CD4-positive, alpha-beta T cell (primary cell): ENCODE measurements at regions of chr1 and their contacts with region 1.

Region 1: GRCh38 chr1:43227143-43227764 is 42.5 kb upstream of the TMEM125 start:
- DNase-seq: peak; percentile 73 to 91 (median 84)
- ATAC-seq: peak; percentile 89
- H3K4me3 ChIP-seq: no peak overlapping the region
- H3K4me3 Mint-ChIP-seq: no peak overlapping the region
- H3K27ac ChIP-seq: no peak overlapping the region
- H3K27ac Mint-ChIP-seq: no peak overlapping the region
- H3K4me1 ChIP-seq: peaks cover 3% of the 10 kb centered on the region
- H3K4me1 Mint-ChIP-seq: no peaks in the 10 kb centered on the region
- H3K27me3 ChIP-seq: no peaks in the 10 kb centered on the region
- H3K27me3 Mint-ChIP-seq: no peaks in the 10 kb centered on the region
- CTCF ChIP-seq: peak; percentile 89

Region 2: GRCh38 chr1:43414634-43415223 is 187.5 kb after region 1 on chr1:
- CTCF ChIA-PET with region 1: interaction called, 58 read pairs
- POLR2A ChIA-PET with region 1: interaction called, 14 read pairs
- intact Hi-C with region 1: loop called (anchors 1 kb)
- DNase-seq: peak; percentile 47 to 79 (median 62)
- ATAC-seq: peak; percentile 95
- H3K4me3 ChIP-seq: no peak overlapping the region
- H3K4me3 Mint-ChIP-seq: no peak overlapping the region
- H3K27ac ChIP-seq: no peak overlapping the region
- H3K27ac Mint-ChIP-seq: peak overlapping the region; percentile 0
- H3K4me1 ChIP-seq: no peaks in the 10 kb centered on the region
- H3K4me1 Mint-ChIP-seq: peaks cover 5% of the 10 kb centered on the region
- H3K27me3 ChIP-seq: no peaks in the 10 kb centered on the region
- H3K27me3 Mint-ChIP-seq: no peaks in the 10 kb centered on the region
- CTCF ChIP-seq: peak; percentile 62